Panc1 (cell line): ENCODE measurements at regions of chrX and their contacts with region 1.

Region 1: GRCh38 chrX:81255876-81256275 is 54.0 kb downstream of the SH3BGRL start:
- DNase-seq: no peak
- ATAC-seq: no peak
- H3K4me3 ChIP-seq: no peak overlapping the region
- H3K27ac ChIP-seq: no peak overlapping the region
- H3K4me1 ChIP-seq: no peaks in the 10 kb centered on the region
- H3K27me3 ChIP-seq: no peaks in the 10 kb centered on the region
- CTCF ChIP-seq: no peak

Region 2: GRCh38 chrX:80810365-80810978 is 445.4 kb before region 1 on chrX:
- CTCF ChIA-PET with region 1: interaction called, 13 read pairs
- POLR2A ChIA-PET with region 1: no interaction called
- in situ Hi-C with region 1: no loop called
- intact Hi-C with region 1: no loop called
- DNase-seq: no peak
- ATAC-seq: no peak
- H3K4me3 ChIP-seq: peak overlapping the region; percentile 65 to 84
- H3K27ac ChIP-seq: peak overlapping the region; percentile 96
- H3K4me1 ChIP-seq: no peaks in the 10 kb centered on the region; the same call in 1 of the 2 replicates
- H3K27me3 ChIP-seq: no peaks in the 10 kb centered on the region
- CTCF ChIP-seq: no peak

Region 3: GRCh38 chrX:81316163-81316562 is 60.3 kb after region 1 on chrX:
- CTCF ChIA-PET with region 1: no interaction called
- POLR2A ChIA-PET with region 1: no interaction called
- in situ Hi-C with region 1: no loop called
- intact Hi-C with region 1: no loop called
- DNase-seq: no peak
- ATAC-seq: no peak
- H3K4me3 ChIP-seq: no peak overlapping the region
- H3K27ac ChIP-seq: no peak overlapping the region
- H3K4me1 ChIP-seq: no peaks in the 10 kb centered on the region
- H3K27me3 ChIP-seq: no peaks in the 10 kb centered on the region
- CTCF ChIP-seq: no peak

Region 4: DNA sequence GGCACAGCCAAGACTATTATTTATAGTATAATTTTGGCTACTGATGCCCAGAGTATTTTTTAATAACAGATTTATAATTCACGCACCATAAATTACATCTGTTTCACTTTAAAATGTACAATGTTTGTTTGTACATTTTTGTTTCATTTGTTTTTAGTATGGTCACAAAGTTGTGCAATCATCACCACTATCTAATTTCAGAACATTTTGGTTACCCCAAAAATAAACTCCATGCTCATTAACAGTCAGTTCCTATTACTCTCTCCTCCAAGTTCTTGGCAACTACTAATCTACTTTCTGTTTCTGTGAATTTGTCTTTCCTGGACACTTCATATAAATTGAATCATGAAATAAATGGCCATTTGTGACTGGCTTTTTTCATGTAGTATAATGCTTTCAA is 122.7 kb after region 1 on chrX:
- CTCF ChIA-PET with region 1: no interaction called
- POLR2A ChIA-PET with region 1: no interaction called
- in situ Hi-C with region 1: no loop called
- intact Hi-C with region 1: no loop called
- DNase-seq: no peak
- ATAC-seq: no peak
- H3K4me3 ChIP-seq: no peak overlapping the region
- H3K27ac ChIP-seq: no peak overlapping the region
- H3K4me1 ChIP-seq: no peaks in the 10 kb centered on the region
- H3K27me3 ChIP-seq: no peaks in the 10 kb centered on the region
- CTCF ChIP-seq: no peak